ENCODE measurements at regions of chr20 and their contacts with region 1.

Region 1: DNA sequence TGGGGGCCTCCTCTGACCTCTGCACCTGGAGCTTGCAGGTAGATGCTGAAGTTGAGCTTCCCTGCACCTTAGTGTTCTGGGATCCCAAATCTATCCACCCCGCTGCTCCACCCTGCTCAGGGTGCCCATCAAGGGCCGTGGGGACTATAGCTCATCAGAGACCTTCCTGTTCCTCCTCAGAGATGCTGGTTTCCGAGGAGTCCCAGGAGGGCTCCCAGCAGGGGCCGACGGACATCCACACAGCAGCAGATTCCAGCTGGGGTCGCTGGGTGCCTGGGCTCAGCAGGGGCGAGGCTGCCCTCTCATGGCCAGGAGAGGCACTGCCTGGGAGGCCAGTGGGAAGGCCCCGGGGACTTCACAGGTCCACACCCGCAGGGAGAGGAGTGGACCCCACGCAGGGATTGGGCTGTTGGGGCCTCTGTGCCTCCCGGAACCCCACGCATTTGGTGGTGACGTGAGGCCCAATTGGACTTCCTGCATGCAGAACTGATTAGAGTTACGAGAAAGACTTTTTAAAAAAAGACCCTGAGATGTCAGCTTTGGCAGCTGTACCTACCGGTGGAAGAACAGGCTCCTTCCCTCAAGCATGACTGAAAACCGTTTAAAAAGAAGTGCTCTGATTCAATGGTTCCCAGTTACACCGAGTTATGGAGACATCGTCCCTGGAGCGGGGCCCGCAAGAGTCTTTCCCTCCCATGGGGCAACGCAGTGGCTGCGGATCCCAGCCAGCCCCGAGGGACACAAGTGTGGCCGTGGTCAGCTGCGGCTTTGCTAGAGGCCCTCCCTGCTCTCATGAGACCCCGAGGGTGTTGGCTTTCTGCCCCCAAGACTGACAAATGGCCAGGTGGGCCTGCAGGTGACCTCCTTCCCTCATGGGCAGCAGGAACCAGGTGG is 25.3 kb upstream of the SLCO4A1 start:
- DNase-seq: peak; percentile 79
- H3K4me3 Mint-ChIP-seq: no peak overlapping the region
- H3K27ac Mint-ChIP-seq: peak overlapping the region; percentile 92
- H3K4me1 Mint-ChIP-seq: peaks cover 43% of the 10 kb centered on the region
- H3K27me3 Mint-ChIP-seq: peaks cover 20% of the 10 kb centered on the region

Region 2: DNA sequence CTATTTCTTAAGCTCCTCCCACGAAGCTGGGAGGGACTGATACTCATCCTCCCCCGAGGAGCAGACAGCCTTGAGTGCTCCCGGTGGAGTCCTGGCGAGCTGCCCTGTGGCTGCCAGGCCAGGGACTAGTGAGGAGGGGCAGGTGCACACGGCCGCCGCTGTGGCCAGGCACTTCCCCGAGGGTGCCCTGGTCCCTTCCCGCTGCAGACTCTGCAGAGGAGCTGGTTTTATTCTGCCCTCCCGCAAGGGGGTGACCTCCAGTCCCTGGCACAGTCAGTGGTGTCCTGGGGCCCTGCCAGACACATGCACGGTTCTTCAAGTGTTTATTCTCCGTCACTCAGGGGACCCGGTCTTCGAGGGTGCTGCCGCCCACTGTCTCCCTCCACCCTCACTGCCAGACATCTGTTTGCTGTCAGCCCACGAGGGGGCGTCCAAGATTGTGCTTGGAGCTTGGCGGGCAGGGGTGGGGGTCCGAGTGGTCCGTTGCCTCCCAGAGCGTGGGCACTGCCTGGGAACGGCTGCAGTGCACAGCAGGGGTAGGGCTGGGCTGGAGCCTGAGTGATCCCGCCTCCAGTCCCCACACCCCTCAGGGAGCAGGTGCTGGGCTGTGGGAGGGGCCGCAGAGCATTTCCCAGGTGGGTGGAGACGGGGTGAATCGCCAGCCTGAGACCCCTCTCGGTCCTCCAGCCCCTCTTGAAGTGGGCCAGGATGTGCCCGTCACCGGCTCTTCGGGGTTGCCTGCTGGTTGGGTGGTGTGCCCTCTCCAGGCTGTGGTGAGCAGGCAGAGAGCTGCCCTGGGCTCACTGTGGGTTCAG is 206.8 kb before region 1 on chr20:
- CTCF ChIA-PET with region 1: interaction called, 12 read pairs
- DNase-seq: peak; percentile 62
- H3K4me3 Mint-ChIP-seq: no peak overlapping the region
- H3K27ac Mint-ChIP-seq: peak overlapping the region; percentile 67
- H3K4me1 Mint-ChIP-seq: peaks cover 27% of the 10 kb centered on the region
- H3K27me3 Mint-ChIP-seq: peaks cover 32% of the 10 kb centered on the region

Region 3: DNA sequence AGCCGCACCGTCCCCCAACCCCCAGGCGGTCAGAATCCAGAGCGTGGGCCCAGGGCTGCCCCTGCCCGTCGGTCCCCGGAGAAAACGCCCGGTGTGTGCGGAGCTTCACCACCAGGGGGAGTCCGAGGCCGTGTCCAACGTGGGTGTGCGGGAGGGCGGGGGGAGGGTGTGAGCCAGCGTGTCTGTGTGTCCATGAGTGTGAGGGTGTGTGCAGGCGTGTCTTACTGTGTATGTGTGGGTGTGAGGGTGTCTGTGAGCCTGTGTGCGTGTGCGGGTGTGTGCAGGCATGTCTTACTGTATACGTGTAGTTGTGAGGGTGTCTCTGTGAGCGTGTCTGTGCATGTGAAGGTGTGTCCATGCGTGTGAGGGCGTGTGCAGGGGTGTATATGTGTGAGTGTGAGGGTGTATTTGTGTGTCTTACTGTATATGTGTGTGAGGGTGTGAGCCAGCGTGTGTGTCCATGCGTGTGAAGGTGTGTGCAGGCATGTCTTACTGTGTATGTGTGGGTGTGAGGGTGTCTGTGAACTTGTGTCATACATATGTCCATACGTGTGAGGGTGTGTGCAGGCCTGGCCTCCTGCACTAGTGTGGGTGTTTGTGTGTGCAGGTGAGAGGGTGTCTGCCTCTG is 116.6 kb before region 1 on chr20:
- CTCF ChIA-PET with region 1: interaction called, 22 read pairs
- DNase-seq: peak; percentile 85
- H3K4me3 Mint-ChIP-seq: no peak overlapping the region
- H3K27ac Mint-ChIP-seq: no peak overlapping the region
- H3K4me1 Mint-ChIP-seq: peaks cover 19% of the 10 kb centered on the region
- H3K27me3 Mint-ChIP-seq: peaks cover 11% of the 10 kb centered on the region

Region 4: DNA sequence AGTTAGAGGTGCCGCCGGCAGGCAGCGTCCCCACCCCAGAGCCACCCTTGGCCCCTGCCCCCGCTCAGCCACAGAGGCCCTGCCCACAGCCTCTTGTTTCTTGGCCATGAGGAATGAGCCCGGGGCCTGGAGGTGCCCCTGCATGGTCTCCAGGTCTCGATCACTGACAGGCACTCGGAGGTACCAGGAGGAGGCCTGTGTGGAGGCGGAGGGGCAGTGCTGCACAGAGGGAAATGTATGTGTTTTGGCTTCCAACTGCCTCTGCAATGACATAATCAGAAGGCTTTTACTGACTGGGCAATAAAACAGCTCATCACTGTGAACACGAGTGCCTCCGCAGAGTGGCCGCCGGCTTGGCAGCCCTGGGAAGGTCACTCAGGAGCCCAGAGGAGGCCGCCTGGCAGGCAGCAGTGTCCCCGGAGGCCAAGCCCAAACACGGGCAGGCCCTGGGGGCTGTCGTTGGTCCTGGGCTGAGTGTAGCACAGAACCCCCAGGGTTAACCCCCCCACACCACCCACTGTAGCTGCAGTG is 80.0 kb before region 1 on chr20:
- CTCF ChIA-PET with region 1: no interaction called
- DNase-seq: no peak
- H3K4me3 Mint-ChIP-seq: no peak overlapping the region
- H3K27ac Mint-ChIP-seq: no peak overlapping the region
- H3K4me1 Mint-ChIP-seq: no peaks in the 10 kb centered on the region
- H3K27me3 Mint-ChIP-seq: peaks cover 8% of the 10 kb centered on the region